ENCODE measurements at regions of chr20 and their contacts with region 1.

Region 1: DNA sequence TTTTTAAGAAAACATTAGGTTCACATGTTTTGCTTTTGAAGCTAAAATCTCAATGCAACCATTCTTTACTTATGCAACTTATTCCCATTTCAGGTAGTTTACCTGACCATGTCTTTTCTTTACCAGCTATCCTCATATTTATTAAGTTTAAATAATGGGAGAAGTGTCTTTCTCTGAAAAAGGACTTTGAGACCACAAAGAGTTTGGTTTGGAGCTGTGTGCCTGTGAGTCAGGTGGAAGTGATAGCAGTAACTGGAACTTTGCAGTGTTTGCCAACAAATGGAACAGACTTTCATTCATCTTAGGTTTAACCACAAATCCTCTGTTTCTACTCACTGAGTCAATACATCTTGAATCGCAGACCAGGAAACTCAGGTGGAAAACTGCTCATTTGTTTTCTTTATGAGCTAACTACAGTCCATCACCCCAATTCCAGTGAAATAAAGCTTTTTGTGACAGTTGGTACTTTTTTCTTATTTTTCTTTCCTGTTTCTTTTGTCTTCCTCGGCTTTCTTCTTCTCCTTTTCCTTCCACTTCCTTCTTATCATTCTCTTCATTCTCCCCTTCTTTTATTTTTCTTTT is 148.3 kb upstream of the RIN2 start:
- DNase-seq: no peak
- H3K4me3 ChIP-seq: no peak overlapping the region
- H3K27me3 ChIP-seq: no peaks in the 10 kb centered on the region
- CTCF ChIP-seq: no peak

Region 2: GRCh38 chr20:18566892-18567742 is 1042.6 kb before region 1 on chr20 and contains the start of gene SMIM26:
- CTCF ChIA-PET with region 1: no interaction called
- POLR2A ChIA-PET with region 1: interaction called, 12 read pairs
- DNase-seq: peak; percentile 42
- H3K4me3 ChIP-seq: peak within 1 kb of the TSS; percentile 52
- H3K27me3 ChIP-seq: no peaks in the 10 kb centered on the region
- CTCF ChIP-seq: no peak
- polyA plus RNA-seq, gene SMIM26: 108 and 232 TPM in 2 replicates

Region 3: DNA sequence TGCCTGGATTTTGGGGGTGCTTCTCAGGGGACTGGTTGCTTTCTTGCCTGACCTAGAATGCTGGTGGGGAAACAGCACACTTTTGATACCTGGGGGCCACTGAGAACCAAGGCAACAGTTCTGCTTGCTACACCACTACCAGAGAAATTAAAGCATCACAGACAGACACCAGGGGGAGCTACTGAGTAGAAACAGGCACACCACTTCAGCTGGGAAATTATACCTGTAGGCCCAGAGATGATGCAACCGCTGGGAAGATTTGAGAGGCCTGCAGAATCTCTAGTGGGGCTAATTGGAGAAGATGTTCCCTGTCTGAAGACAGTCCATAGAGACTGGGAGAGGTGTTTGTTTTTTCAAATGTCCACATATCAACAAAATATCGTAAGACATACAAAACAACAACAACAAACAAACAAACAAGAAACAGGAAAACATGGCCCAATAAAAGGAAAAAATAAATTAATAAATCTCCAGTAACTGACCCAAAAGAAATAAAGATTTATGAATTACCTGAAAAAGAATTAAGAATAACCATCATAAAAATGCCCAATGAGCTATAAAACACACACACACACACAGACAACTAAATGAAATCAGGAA is 18.9 kb after region 1 on chr20:
- CTCF ChIA-PET with region 1: interaction called, 12 read pairs
- POLR2A ChIA-PET with region 1: no interaction called
- DNase-seq: no peak
- H3K4me3 ChIP-seq: no peak overlapping the region
- H3K27me3 ChIP-seq: no peaks in the 10 kb centered on the region
- CTCF ChIP-seq: peak; percentile 82

Measured in BJ (cell line).